Activated B cell treated with CpG ODN at 0.5 μM for 24 hours (primary cell): ENCODE measurements at regions of chr14 and their contacts with region 1.

Region 1: DNA sequence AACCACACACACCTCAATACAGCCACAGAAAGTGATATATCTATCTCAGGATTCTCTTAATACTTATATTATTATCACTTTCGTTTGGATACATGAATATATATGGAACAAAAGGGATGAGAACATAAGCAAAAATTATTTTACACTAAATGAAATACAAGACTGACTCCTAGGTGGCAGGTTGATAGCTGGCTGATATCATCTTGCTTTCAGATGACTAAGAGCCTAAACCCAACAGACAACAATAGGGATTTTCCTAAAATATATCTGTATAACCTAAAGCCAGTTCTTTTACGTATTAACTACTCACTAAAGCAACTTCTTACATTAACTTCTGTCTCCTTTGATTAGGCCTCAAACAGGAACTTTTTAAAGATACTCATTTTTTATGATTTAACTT is 65.1 kb downstream of the BAZ1A start:
- DNase-seq: no peak
- ATAC-seq: no peak
- H3K4me3 Mint-ChIP-seq: no peak overlapping the region
- H3K27ac Mint-ChIP-seq: no peak overlapping the region
- H3K4me1 Mint-ChIP-seq: no peaks in the 10 kb centered on the region
- H3K27me3 Mint-ChIP-seq: no peaks in the 10 kb centered on the region
- CTCF ChIP-seq: no peak

Region 2: DNA sequence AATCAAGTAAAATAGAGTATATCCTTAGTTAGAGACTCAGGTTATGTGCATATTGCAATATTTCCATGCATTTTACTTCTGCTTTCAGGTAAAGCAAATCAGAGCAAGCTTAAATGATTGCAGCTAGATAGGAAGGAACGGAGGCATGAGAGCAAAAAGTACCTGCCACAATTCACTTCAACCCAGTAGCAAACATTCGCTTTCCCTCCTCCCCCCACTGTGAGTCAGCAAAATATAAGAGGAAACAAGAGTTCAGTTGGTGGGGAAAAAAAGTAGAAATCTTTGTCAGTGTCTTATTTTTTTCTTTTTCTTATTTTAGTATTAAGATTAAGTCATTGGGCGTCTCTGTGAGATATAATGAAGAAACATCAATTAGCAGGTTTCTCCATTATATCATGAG is 1396.0 kb before region 1 on chr14:
- CTCF ChIA-PET with region 1: no interaction called
- POLR2A ChIA-PET with region 1: no interaction called
- intact Hi-C with region 1: no loop called
- DNase-seq: no peak
- ATAC-seq: no peak
- H3K4me3 Mint-ChIP-seq: no peak overlapping the region
- H3K27ac Mint-ChIP-seq: no peak overlapping the region
- H3K4me1 Mint-ChIP-seq: no peaks in the 10 kb centered on the region
- H3K27me3 Mint-ChIP-seq: no peaks in the 10 kb centered on the region
- CTCF ChIP-seq: no peak

Region 3: GRCh38 chr14:34797747-34798583 is 12.1 kb before region 1 on chr14:
- CTCF ChIA-PET with region 1: no interaction called
- POLR2A ChIA-PET with region 1: no interaction called
- intact Hi-C with region 1: loop called (anchors 2 kb)
- DNase-seq: no peak
- ATAC-seq: no peak
- H3K4me3 Mint-ChIP-seq: no peak overlapping the region
- H3K27ac Mint-ChIP-seq: no peak overlapping the region
- H3K4me1 Mint-ChIP-seq: no peaks in the 10 kb centered on the region
- H3K27me3 Mint-ChIP-seq: no peaks in the 10 kb centered on the region
- CTCF ChIP-seq: no peak